GM18951 (cell line): ENCODE measurements at regions of chr4 and their contacts with region 1.

Region 1: GRCh38 chr4:26404743-26405206 is 84.0 kb downstream of the RBPJ start:
- POLR2A ChIP-seq: no peak

Region 2: GRCh38 chr4:26058537-26058936 is 346.2 kb before region 1 on chr4:
- in situ Hi-C with region 1: loop called (anchors 10 kb)
- POLR2A ChIP-seq: no peak

Region 3: GRCh38 chr4:26320538-26321325 is 84.0 kb before region 1 on chr4 and contains the start of gene RBPJ:
- in situ Hi-C with region 1: loop called (anchors 5 kb)
- POLR2A ChIP-seq: peak; percentile 60

Region 4: GRCh38 chr4:26648260-26648659 is 243.5 kb after region 1 on chr4:
- in situ Hi-C with region 1: no loop called
- POLR2A ChIP-seq: no peak